ENCODE measurements at regions of chr2 and their contacts with region 1.

Region 1: DNA sequence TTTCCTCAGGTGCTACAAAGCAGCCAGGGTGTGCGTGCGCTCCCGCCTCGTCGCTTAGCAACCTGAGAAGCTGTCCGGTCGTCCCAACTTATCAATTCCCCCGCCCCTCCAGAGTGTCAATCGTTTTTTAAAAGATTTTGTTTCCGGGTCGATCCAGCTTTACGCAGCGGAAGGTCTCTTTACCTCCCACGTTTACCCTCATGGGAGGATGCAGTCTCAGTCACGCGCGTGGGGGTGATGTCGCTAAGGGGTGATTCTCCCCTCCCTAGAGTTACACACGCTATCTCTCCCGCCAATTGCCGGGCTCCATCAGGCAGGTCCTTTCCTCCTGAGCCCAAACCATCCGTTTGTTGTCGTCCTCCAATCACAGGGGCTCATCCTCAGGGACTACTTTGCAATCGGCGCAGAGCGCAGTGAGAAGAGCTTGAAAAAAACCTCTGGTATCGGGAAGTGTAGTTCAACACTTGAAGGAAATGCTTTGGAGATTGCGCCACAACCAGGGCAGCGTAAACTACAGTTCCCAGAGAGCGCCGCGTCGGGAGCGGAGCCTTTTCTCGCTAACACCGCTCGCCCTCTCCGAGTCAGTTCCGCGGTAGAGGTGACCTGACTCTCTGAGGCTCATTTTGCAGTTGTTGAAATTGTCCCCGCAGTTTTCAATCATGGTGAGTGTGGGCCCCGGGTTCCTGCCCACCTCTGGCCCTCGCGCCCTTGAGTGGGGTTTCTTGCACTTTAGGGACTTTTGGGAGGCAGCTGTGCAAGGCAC is at the starts of genes MDH1 and WDPCP:
- DNase-seq: peak; percentile 74 to 99 (median 96)
- ATAC-seq: peak; percentile 89
- H3K4me3 ChIP-seq: peak within 1 kb of the TSS; percentile 91
- H3K4me3 Mint-ChIP-seq: peak within 1 kb of the TSS; percentile 89 to 99 (median 94)
- H3K27ac ChIP-seq: peak within 1 kb of the TSS; percentile 89
- H3K27ac Mint-ChIP-seq: peak within 1 kb of the TSS; percentile 89 to 99 (median 95)
- H3K4me1 ChIP-seq: peaks cover 16 to 23% of the 10 kb centered on the region in 2 donors
- H3K4me1 Mint-ChIP-seq: peaks cover 24 to 63% (median 45%) of the 10 kb centered on the region in 7 donors
- H3K27me3 ChIP-seq: no peaks in the 10 kb centered on the region
- H3K27me3 Mint-ChIP-seq: no peaks in the 10 kb centered on the region
- total RNA-seq, gene MDH1: 76.5 to 180 (median 84.2) TPM
- total RNA-seq, gene WDPCP: 7.6 to 19.2 (median 16.1) TPM

Region 2: DNA sequence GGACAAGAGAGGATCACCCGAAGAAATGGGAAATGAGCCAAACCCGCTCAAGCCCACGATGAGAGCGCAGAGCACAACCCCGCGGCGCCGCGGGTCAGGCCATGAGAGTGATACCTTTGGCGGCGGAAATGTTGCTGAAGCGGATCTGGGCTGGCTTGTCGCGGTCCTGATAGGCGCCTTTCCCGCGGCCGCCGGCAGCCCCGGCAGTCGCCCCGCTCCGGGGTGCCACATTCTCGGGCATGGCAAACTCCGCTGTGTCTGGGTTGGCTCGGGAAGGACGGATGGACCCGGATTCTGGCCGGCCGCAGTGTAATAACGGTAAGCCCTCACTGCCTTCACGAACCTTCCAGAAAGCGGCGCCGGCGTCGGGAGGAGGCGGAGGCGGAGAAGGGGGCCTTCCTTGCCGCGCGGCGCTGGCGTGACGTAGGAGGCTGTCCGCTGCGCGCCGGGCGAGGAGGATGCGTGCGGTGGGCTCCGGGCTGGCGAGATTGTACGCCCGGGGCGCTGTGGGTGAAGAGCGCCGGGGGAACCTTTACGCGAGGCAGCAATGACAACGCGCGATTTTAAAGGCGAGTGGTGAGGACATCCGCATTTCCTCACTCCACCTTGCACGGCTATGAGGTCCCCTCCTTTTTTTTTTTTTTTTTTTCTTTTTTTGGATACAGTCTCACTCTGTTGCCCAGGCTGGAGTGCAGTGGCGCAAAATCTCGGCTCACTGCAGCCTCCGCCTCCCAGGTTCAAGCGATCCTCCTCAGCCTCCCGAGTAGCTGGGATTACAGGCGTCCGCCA is 1700.1 kb before region 1 on chr2 and contains the start of gene CCT4:
- CTCF ChIA-PET with region 1: no interaction called
- POLR2A ChIA-PET with region 1: no interaction called
- intact Hi-C with region 1: loop called in 1 of 2 experiments (anchors 1 kb)
- DNase-seq: peak; percentile 86 to 99 (median 95)
- ATAC-seq: peak; percentile 94
- H3K4me3 ChIP-seq: peak within 1 kb of the TSS; percentile 92
- H3K4me3 Mint-ChIP-seq: peak within 1 kb of the TSS; percentile 85 to 100 (median 99)
- H3K27ac ChIP-seq: peak within 1 kb of the TSS; percentile 98
- H3K27ac Mint-ChIP-seq: peak within 1 kb of the TSS; percentile 98 to 100 (median 100)
- H3K4me1 ChIP-seq: peaks cover 15 to 17% of the 10 kb centered on the region in 2 donors
- H3K4me1 Mint-ChIP-seq: peaks cover 11 to 34% (median 29%) of the 10 kb centered on the region in 7 donors
- H3K27me3 ChIP-seq: no peaks in the 10 kb centered on the region
- H3K27me3 Mint-ChIP-seq: no peaks in the 10 kb centered on the region
- total RNA-seq, gene CCT4: 84.2 to 177 (median 90.3) TPM

Region 3: DNA sequence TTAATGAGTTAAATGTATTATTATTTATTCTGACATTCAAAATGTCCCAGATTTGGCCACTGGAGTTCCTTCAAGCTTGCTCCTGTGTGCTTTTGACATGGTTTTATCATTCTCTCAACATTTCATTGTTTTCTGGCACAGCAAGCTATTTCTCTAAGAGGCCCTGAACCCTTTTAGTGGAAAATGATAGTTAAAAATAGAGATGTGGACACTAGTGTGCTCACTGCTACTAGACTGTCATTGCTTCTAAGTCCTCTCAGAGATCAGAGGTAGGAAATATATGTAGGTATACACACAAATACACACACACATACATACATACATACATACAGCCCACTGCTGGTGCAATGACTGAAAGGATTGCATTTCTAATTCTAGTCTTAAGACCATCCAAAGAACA is 25.8 kb before region 1 on chr2:
- CTCF ChIA-PET with region 1: no interaction called
- POLR2A ChIA-PET with region 1: no interaction called
- intact Hi-C with region 1: no loop called
- DNase-seq: no peak
- ATAC-seq: no peak
- H3K4me3 ChIP-seq: no peak overlapping the region
- H3K4me3 Mint-ChIP-seq: no peak overlapping the region
- H3K27ac ChIP-seq: no peak overlapping the region
- H3K27ac Mint-ChIP-seq: no peak overlapping the region
- H3K4me1 ChIP-seq: no peaks in the 10 kb centered on the region
- H3K4me1 Mint-ChIP-seq: peaks cover 3 to 11% (median 4%) of the 10 kb centered on the region in 7 donors
- H3K27me3 ChIP-seq: no peaks in the 10 kb centered on the region
- H3K27me3 Mint-ChIP-seq: no peaks in the 10 kb centered on the region

Region 4: DNA sequence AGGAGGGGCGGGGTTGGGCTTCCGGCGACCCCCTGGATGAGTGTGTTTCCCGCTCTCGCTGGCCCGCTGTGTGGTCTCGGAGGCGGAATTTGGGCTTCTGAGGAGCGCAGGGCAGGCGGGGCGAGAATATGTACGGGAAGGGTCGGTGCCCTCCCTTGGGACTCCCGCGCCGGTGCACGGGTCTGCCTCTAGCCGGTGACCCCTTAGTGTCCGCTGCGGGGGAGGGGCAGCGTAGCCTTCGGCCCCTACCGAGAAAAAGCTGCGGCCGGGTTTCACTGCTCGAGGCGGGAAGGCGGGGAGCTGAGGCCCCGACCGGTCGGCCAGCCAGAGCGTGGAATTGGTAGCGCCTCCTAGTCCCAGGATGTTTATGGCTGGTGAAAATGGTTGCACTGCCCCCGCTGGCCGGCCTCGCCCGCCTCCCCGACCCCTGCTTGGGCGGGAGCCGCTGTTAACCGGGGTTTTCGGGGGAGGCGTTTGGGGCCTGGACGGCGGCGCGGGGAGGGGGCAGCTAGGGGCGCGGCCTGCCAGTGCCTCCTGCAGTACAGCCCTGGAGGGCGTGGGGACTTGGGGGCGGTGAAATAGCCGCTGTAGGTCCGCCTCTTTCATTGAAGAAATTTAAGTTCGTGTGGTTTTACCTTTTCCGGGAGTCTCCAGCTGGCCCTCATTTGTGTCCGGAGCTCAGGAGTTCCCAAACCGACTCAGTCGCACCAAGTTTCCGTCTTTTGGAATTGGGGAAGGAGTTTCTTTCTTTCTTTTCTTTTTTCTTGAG is 252.9 kb after region 1 on chr2 and contains the start of gene UGP2:
- CTCF ChIA-PET with region 1: no interaction called
- POLR2A ChIA-PET with region 1: interaction called, 23 read pairs
- intact Hi-C with region 1: loop called (anchors 1 kb)
- DNase-seq: peak; percentile 68 to 89 (median 83)
- ATAC-seq: peak; percentile 77
- H3K4me3 ChIP-seq: peak within 1 kb of the TSS; percentile 82
- H3K4me3 Mint-ChIP-seq: peak within 1 kb of the TSS; percentile 97 to 100 (median 99)
- H3K27ac ChIP-seq: peak within 1 kb of the TSS; percentile 90
- H3K27ac Mint-ChIP-seq: peak within 1 kb of the TSS; percentile 95 to 99 (median 97)
- H3K4me1 ChIP-seq: peaks cover 5 to 24% of the 10 kb centered on the region in 2 donors
- H3K4me1 Mint-ChIP-seq: peaks cover 27 to 60% (median 53%) of the 10 kb centered on the region in 7 donors
- H3K27me3 ChIP-seq: no peaks in the 10 kb centered on the region
- H3K27me3 Mint-ChIP-seq: peaks cover 0 to 14% (median 0%) of the 10 kb centered on the region in 5 donors
- total RNA-seq, gene UGP2: 69.5 to 134 (median 92.4) TPM

Region 5: DNA sequence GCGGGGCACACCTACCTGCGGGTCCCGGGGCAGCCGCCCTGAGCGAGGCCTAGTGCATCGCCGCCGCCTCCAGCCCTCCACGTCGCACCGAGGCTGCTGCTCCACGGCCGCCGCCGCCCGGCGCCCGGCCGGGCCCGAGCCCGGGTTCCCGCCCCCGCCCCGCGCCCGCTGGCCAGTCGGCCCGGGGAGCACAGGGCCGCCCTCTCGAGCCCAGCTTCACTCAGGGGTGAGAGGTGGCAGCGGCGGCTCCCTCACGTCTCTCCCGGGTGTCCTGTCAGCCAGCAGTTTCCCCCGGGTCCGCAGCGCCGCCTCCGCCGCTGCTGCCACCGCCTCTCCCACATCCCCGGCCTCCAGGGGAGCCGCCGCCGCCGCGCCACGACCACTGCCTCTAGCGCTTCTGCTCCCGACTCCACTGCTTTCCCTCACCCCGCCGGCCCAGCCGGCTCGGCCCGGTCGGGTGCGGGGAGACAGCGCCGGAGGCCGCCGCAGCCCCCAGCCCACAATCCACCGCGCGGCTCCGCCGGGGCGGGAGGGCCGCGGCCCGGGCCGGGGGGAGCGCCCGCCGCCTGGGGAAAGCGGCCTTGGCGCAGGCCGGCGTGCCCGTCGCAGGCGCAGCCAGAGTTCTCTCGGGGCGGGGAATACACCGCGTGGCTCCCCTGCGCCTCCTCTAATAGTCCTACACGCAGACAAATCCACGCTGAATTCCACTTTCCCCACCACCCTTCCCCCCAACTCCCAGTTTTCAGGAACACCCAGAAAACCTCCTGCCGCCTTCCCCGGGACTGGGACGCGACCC is 430.6 kb after region 1 on chr2 and contains the start of gene VPS54:
- CTCF ChIA-PET with region 1: no interaction called
- POLR2A ChIA-PET with region 1: no interaction called
- intact Hi-C with region 1: loop called (anchors 2 to 5 kb)
- DNase-seq: peak; percentile 42 to 76 (median 65)
- ATAC-seq: peak; percentile 87
- H3K4me3 ChIP-seq: peak within 1 kb of the TSS; percentile 86
- H3K4me3 Mint-ChIP-seq: peak within 1 kb of the TSS; percentile 94 to 100 (median 98)
- H3K27ac ChIP-seq: peak within 1 kb of the TSS; percentile 79
- H3K27ac Mint-ChIP-seq: peak within 1 kb of the TSS; percentile 95 to 100 (median 97)
- H3K4me1 ChIP-seq: peaks cover 22 to 31% of the 10 kb centered on the region in 2 donors
- H3K4me1 Mint-ChIP-seq: peaks cover 20 to 60% (median 48%) of the 10 kb centered on the region in 7 donors
- H3K27me3 ChIP-seq: no peaks in the 10 kb centered on the region
- H3K27me3 Mint-ChIP-seq: no peaks in the 10 kb centered on the region
- total RNA-seq, gene VPS54: 13.2 to 20.8 (median 15.6) TPM

Region 6: GRCh38 chr2:64767670-64768468 is 1179.3 kb after region 1 on chr2:
- CTCF ChIA-PET with region 1: no interaction called
- POLR2A ChIA-PET with region 1: no interaction called
- intact Hi-C with region 1: loop called in 1 of 2 experiments (anchors 1 kb)
- DNase-seq: peak; percentile 35 to 78 (median 55)
- ATAC-seq: peak; percentile 89
- H3K4me3 ChIP-seq: peak overlapping the region; percentile 80
- H3K4me3 Mint-ChIP-seq: peak overlapping the region; percentile 90 to 99 (median 96)
- H3K27ac ChIP-seq: peak overlapping the region; percentile 73
- H3K27ac Mint-ChIP-seq: peak overlapping the region; percentile 92 to 97 (median 95)
- H3K4me1 ChIP-seq: peaks cover 3 to 12% of the 10 kb centered on the region in 2 donors
- H3K4me1 Mint-ChIP-seq: peaks cover 9 to 40% (median 23%) of the 10 kb centered on the region in 7 donors
- H3K27me3 ChIP-seq: no peaks in the 10 kb centered on the region
- H3K27me3 Mint-ChIP-seq: peaks cover 0 to 15% (median 0%) of the 10 kb centered on the region in 5 donors

Region 7: GRCh38 chr2:65227425-65228262 is 1639.1 kb after region 1 on chr2 and contains the start of gene ACTR2:
- CTCF ChIA-PET with region 1: no interaction called
- POLR2A ChIA-PET with region 1: interaction called, 3 read pairs
- intact Hi-C with region 1: loop called (anchors 1 kb)
- DNase-seq: peak; percentile 86 to 94 (median 93)
- ATAC-seq: peak; percentile 97
- H3K4me3 ChIP-seq: peak within 1 kb of the TSS; percentile 99
- H3K4me3 Mint-ChIP-seq: peak within 1 kb of the TSS; percentile 95 to 100 (median 98)
- H3K27ac ChIP-seq: peak within 1 kb of the TSS; percentile 97
- H3K27ac Mint-ChIP-seq: peak within 1 kb of the TSS; percentile 97 to 99 (median 98)
- H3K4me1 ChIP-seq: peaks cover 25 to 38% of the 10 kb centered on the region in 2 donors
- H3K4me1 Mint-ChIP-seq: peaks cover 24 to 54% (median 44%) of the 10 kb centered on the region in 7 donors
- H3K27me3 ChIP-seq: no peaks in the 10 kb centered on the region
- H3K27me3 Mint-ChIP-seq: no peaks in the 10 kb centered on the region
- total RNA-seq, gene ACTR2: 180 to 435 (median 287) TPM